ENCODE measurements at regions of chr7 and their contacts with region 1.

Region 1: DNA sequence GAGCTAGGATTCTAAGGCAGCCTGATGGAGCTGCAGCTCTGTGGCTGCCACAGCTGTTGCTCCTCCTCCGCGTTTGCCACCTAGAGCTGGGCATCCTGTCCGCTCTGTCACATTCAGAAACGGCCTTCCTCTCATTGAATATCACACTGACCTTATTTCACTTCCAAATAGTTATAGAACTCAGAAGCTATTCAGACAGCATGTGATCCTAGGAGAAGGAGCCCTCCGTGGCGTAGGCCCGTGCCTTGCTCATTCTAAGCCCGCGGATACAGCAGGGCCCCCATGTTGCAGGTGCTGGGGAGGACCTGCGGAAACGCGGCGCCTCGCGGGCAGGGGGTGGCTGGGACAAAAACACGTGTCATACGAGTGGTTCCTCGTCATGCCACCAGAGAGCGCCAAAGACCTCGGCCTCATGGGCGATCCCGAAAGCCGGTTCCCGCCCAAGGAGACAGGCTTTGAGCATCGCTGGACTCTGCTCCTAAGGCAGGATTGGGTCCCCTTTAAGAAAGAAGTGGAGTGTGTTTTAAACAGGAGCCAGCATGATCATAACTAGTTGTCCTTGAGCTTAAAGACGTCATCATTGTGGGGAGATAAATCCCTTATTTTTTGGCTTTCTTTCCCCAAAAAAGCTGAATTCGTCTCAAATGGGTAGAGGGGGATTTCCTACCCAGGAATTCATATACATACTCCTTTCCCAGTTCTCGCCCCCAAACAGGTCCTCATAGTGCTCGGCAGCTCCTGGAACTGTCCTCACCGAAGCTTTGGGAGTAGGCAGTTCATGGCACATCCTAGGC is 17.9 kb upstream of the FIGNL1 start:
- DNase-seq: peak; percentile 89
- H3K4me3 Mint-ChIP-seq: peak overlapping the region; percentile 2
- H3K27ac Mint-ChIP-seq: no peak overlapping the region
- H3K4me1 Mint-ChIP-seq: peaks cover 12% of the 10 kb centered on the region
- H3K27me3 Mint-ChIP-seq: peaks cover 20% of the 10 kb centered on the region

Region 2: DNA sequence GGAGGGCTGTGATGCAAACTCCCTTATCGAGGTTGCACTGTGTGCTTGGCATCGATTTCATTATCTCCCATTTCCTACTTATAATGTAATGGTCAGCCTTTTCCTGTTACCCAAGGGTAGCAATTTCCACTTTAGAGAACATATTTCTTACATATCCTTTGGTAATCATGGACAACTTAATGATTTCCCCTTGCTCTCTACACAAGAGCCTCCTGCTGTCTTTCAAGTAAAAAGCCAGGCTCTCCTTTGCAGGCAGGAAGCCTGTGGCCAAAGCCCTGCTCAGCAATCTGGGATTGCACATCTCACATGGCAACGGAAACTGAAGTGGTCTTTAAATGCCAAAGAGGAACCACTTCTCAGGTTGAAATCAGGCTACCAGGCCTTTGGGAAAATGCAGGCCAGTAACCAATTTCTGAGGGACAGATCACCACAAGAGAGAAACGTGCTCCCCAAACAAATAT is 250.2 kb before region 1 on chr7:
- CTCF ChIA-PET with region 1: no interaction called
- DNase-seq: no peak
- H3K4me3 Mint-ChIP-seq: no peak overlapping the region
- H3K27ac Mint-ChIP-seq: no peak overlapping the region
- H3K4me1 Mint-ChIP-seq: peaks cover 61% of the 10 kb centered on the region
- H3K27me3 Mint-ChIP-seq: peaks cover 3% of the 10 kb centered on the region

Region 3: GRCh38 chr7:50359995-50360925 is 107.8 kb before region 1 on chr7:
- CTCF ChIA-PET with region 1: no interaction called
- DNase-seq: peak; percentile 90
- H3K4me3 Mint-ChIP-seq: peak overlapping the region; percentile 51
- H3K27ac Mint-ChIP-seq: peak overlapping the region; percentile 95
- H3K4me1 Mint-ChIP-seq: peaks cover 99% of the 10 kb centered on the region
- H3K27me3 Mint-ChIP-seq: no peaks in the 10 kb centered on the region

Region 4: GRCh38 chr7:50595491-50596102 is 127.6 kb after region 1 on chr7:
- CTCF ChIA-PET with region 1: interaction called, 13 read pairs
- DNase-seq: peak; percentile 30
- H3K4me3 Mint-ChIP-seq: no peak overlapping the region
- H3K27ac Mint-ChIP-seq: no peak overlapping the region
- H3K4me1 Mint-ChIP-seq: peaks cover 31% of the 10 kb centered on the region
- H3K27me3 Mint-ChIP-seq: peaks cover 9% of the 10 kb centered on the region

Region 5: DNA sequence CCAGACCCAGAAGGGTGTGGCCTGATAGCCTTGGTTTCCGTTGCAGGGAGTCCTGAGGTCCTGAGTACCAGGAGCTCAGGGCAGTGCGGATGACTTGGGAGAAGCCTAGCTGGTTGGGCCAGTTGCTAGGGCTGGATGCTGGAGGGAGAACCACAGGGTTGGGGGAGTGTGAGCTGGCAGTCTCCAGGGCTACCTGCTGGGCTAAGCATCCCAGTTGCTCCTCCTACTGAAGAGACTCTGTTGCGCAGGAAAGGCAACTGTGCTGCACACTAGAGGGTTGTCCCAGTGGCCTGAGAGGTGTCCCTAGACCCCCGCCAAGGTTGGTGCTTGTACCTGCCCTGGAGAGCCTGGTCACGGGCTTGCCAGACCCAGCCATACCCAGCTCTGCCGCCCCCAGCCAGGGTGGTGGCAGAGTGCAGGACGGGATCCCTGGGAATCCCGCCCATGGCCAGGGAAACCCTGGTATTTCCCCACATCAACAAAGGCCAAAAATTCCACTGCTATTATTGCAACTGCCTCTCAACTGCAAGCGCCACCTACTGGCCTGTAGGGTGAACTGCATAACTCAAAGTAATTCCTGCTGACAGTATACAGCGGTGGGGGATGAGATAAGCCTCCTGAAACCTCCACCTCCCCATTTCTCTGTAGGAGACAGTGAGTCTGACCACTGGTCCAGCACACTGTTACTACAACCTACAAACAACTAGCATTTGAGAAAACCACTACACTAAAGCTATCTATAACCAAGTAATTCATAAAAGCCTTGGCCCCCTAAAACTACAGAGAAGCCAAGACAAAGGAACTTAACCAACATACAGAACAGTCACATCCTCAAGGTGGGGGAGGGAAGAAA is 164.8 kb after region 1 on chr7:
- CTCF ChIA-PET with region 1: interaction called, 68 read pairs
- DNase-seq: peak; percentile 64
- H3K4me3 Mint-ChIP-seq: no peak overlapping the region
- H3K27ac Mint-ChIP-seq: no peak overlapping the region
- H3K4me1 Mint-ChIP-seq: no peaks in the 10 kb centered on the region
- H3K27me3 Mint-ChIP-seq: peaks cover 23% of the 10 kb centered on the region

Region 6: GRCh38 chr7:50679218-50680007 is 211.4 kb after region 1 on chr7:
- CTCF ChIA-PET with region 1: interaction called, 76 read pairs
- DNase-seq: no peak
- H3K4me3 Mint-ChIP-seq: no peak overlapping the region
- H3K27ac Mint-ChIP-seq: no peak overlapping the region
- H3K4me1 Mint-ChIP-seq: no peaks in the 10 kb centered on the region
- H3K27me3 Mint-ChIP-seq: peaks cover 6% of the 10 kb centered on the region

Region 7: GRCh38 chr7:51162724-51163329 is 694.8 kb after region 1 on chr7:
- CTCF ChIA-PET with region 1: interaction called, 40 read pairs
- DNase-seq: peak; percentile 81
- H3K4me3 Mint-ChIP-seq: no peak overlapping the region
- H3K27ac Mint-ChIP-seq: no peak overlapping the region
- H3K4me1 Mint-ChIP-seq: no peaks in the 10 kb centered on the region
- H3K27me3 Mint-ChIP-seq: peaks cover 15% of the 10 kb centered on the region